ENCODE measurements at regions of chrX and their contacts with region 1.

Region 1: DNA sequence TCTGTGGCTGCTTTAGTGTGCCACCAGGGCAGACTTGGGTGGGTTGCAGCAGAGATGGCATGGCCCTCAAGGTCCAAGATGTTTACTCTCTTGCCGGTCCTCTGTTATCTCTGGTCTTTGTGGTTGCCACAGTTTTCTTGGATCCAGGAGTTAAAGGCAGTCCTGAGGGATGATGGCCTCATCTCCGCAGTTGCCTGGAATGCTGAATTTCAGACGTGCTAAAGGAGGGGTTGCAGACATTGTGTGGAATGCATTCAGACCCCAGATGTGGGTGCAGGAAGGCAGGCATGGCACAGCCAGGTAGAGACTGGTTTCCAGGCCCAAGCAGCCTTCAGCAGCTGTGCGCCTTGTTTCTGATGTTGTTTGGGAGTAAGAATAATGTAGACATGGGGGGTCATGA is 64.4 kb downstream of the TBL1X start:
- DNase-seq: no peak

Region 2: DNA sequence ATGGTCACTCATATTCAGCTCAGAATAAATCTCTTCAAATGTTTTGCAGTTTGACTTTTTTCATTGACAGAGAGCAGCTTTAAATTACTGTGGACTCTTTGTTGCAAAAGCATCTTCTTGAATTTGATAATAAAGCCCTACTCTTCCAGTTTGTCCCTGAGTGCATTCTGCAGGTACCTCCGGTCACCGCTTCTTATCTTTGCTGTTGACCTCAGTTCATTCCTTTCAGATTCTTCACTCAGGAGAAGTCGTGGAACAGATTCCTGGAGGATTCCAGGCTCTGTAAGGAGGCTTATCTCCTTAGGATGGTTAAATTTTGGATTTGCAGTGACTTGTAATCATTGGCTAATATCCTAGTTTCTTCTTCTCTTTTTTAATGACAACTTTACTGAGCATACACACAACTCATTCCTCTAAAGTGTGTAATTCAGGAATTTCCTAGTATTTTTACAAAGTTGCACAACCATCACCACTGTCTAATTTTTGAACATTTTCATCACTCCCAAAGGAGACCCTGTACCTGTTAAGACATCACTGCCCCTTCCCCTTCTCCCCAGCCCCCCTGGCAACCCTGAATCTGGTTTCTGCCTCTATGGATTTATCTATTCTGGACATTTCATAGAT is 42.3 kb before region 1 on chrX:
- intact Hi-C with region 1: loop called in 1 of 2 experiments (anchors 1 kb)
- DNase-seq: no peak

Region 3: GRCh38 chrX:9566150-9566621 is 37.0 kb after region 1 on chrX:
- intact Hi-C with region 1: no loop called
- DNase-seq: peak; percentile 85

Measured in posterior vena cava (tissue), 2 donors.